CD8-positive, alpha-beta memory T cell (primary cell): ENCODE measurements at regions of chr16 and their contacts with region 1.

Region 1: DNA sequence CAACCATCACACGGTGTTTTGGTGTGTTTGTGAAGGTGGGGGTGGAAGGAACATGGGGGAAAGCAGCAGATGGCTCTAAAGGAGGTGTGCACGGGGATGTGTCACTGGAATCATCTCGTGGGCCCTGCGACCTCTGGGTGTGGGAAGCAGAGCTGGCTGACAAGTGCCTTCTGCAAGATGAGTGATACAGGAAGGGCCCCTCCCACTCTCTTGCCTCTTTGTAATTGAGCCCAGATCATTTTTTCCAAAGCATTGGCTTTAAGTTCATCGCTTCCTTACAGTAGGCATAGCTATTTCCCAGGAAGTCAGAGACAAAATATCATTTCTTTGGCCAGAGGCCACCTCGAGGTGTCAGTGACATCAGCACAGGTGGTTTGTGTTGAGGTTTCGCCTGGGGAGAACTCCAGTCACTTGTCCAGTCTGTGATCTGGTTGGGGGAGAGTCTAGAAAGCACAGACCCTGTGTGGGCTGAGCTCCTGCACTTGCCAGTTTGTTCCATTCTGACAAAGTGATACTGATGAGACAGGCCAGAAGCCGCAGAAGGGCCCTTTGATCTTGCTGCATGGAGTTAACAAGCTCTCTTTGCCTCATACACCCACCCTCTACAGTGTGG is 20.6 kb upstream of the SNTB2 start:
- DNase-seq: peak in 3 of 5 donors; percentile 1 to 56 (median 21)
- H3K4me3 ChIP-seq: no peak overlapping the region
- H3K4me3 Mint-ChIP-seq: peak overlapping the region in 6 of 7 donors; percentile 24 to 61 (median 49)
- H3K27ac ChIP-seq: no peak overlapping the region
- H3K27ac Mint-ChIP-seq: peak overlapping the region; percentile 44 to 94 (median 75)
- H3K4me1 ChIP-seq: peaks cover 11% of the 10 kb centered on the region
- H3K4me1 Mint-ChIP-seq: peaks cover 24 to 35% (median 26%) of the 10 kb centered on the region in 3 donors
- H3K27me3 ChIP-seq: no peaks in the 10 kb centered on the region
- H3K27me3 Mint-ChIP-seq: no peaks in the 10 kb centered on the region

Region 2: GRCh38 chr16:69186642-69187445 is 20.5 kb after region 1 on chr16 and contains the start of gene SNTB2:
- CTCF ChIA-PET with region 1: interaction called, 21 read pairs
- POLR2A ChIA-PET with region 1: interaction called, 6 read pairs
- DNase-seq: peak; percentile 78 to 88 (median 84)
- H3K4me3 ChIP-seq: peak within 1 kb of the TSS; percentile 78
- H3K4me3 Mint-ChIP-seq: peak within 1 kb of the TSS; percentile 97 to 100 (median 100)
- H3K27ac ChIP-seq: peak within 1 kb of the TSS; percentile 72
- H3K27ac Mint-ChIP-seq: peak within 1 kb of the TSS; percentile 91 to 100 (median 98)
- H3K4me1 ChIP-seq: peaks cover 42% of the 10 kb centered on the region
- H3K4me1 Mint-ChIP-seq: peaks cover 43 to 55% (median 53%) of the 10 kb centered on the region in 3 donors
- H3K27me3 ChIP-seq: no peaks in the 10 kb centered on the region
- H3K27me3 Mint-ChIP-seq: peaks cover 0 to 2% of the 10 kb centered on the region in 2 donors
- total RNA-seq, gene SNTB2: 13.6 to 14.9 TPM